ENCODE measurements at regions of chr14 and their contacts with region 1.

Region 1: GRCh38 chr14:63388763-63389431 is 70.2 kb upstream of the GPHB5 start:
- DNase-seq: peak; percentile 18
- H3K4me3 ChIP-seq: no peak overlapping the region
- H3K27ac ChIP-seq: no peak overlapping the region
- H3K27me3 ChIP-seq: no peaks in the 10 kb centered on the region
- CTCF ChIP-seq: peak; percentile 91

Region 2: GRCh38 chr14:62558451-62558850 is 830.4 kb before region 1 on chr14:
- CTCF ChIA-PET with region 1: no interaction called
- POLR2A ChIA-PET with region 1: no interaction called
- DNase-seq: no peak
- H3K4me3 ChIP-seq: no peak overlapping the region
- H3K27ac ChIP-seq: no peak overlapping the region
- H3K27me3 ChIP-seq: no peaks in the 10 kb centered on the region
- CTCF ChIP-seq: no peak

Region 3: GRCh38 chr14:63536387-63536786 is 147.5 kb after region 1 on chr14:
- CTCF ChIA-PET with region 1: interaction called, 10 read pairs
- POLR2A ChIA-PET with region 1: no interaction called
- DNase-seq: no peak
- H3K4me3 ChIP-seq: no peak overlapping the region
- H3K27ac ChIP-seq: no peak overlapping the region
- H3K27me3 ChIP-seq: no peaks in the 10 kb centered on the region
- CTCF ChIP-seq: no peak

Region 4: DNA sequence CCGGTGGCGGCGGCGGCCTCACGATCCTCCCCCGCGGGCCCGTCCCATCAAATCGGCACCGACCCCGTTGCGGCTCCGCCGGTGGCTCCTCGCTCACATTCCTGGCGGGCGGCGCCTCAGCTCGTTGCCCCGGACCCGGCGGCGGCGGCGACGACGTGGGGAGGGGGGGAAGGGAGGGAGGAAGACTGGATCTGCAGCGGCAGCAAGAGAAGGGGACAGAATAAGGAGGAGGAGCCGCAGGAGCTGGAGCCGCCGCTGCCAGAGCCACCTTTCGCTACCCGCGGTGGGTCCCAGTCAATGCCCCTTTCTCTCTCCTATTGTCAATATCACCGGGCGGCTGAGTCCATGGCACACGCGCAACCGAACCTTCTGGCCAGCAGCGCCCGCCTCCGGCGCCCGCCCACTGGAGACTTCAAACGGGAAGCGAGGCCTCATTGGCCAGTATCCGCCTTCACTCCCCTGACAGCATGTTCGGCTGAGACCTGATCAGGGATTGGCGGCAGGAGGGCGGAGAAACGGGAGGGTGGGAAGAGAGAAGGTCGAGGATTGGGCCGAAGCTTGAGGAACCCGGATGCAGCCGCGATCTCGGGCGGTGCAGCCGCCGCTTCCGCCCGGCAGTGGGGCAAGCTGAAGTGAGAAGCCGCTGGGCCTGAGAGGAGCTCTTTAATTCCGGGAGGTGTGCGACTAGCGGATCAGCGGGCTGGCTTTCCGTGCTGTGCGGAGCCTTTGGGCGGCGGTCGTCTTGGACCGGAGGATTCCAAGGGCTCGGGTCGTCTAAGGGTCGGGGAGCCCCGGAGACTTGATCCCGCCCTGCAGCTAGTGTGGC is 154.3 kb after region 1 on chr14 and contains the start of gene PPP2R5E:
- CTCF ChIA-PET with region 1: interaction called, 35 read pairs
- POLR2A ChIA-PET with region 1: no interaction called
- DNase-seq: peak; percentile 97
- H3K4me3 ChIP-seq: peak within 1 kb of the TSS; percentile 89
- H3K27ac ChIP-seq: peak within 1 kb of the TSS; percentile 77
- H3K27me3 ChIP-seq: no peaks in the 10 kb centered on the region
- CTCF ChIP-seq: no peak
- polyA plus RNA-seq, gene PPP2R5E: 18.2 and 20.3 TPM in 2 replicates

Region 5: DNA sequence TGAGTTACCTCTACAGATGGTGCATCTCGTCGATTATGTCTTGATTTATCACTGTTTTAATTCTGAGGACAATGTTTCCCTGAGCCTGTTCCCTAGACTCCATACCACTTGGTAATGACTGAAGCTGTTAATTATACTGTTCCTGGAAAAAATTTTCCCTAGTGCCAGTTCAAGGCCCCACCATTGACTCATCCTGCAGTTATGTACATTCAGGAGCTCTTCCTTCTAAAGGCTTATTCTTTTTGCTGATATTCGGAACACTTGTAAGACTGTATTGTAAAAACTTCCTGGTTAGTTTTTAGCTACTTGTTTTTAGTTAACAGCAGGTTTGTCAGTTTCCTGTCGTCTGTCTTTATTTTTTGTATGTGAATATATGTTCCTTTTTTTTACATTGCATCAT is 184.7 kb after region 1 on chr14:
- CTCF ChIA-PET with region 1: no interaction called
- POLR2A ChIA-PET with region 1: no interaction called
- DNase-seq: no peak
- H3K4me3 ChIP-seq: no peak overlapping the region
- H3K27ac ChIP-seq: no peak overlapping the region
- H3K27me3 ChIP-seq: no peaks in the 10 kb centered on the region
- CTCF ChIP-seq: no peak

Region 6: DNA sequence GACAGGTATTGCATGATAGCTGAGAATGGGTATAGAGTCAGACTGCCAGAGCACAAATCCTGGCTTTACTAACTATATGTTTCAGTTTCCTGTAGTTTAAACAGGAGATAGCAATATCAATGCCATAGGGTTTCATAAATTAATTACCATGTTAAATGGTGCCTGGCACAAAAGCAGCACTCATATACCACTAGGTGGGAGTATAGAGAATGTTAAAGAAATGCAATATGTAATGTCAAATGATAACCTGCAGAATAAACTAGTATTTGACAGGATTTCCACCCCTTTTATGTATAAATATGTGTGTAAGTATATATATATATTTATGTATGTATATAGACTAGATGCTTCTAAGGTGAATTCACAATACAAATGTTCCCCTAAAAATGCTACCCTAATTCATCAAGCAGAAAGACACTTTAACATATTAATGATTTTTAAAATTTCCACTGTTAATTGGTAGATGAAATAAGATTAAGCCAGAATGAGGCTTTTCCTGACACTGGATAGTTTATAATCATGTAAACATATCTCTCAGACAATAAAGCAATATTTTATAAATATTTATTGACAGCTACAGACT is 244.1 kb after region 1 on chr14:
- CTCF ChIA-PET with region 1: interaction called, 31 read pairs
- POLR2A ChIA-PET with region 1: no interaction called
- DNase-seq: no peak
- H3K4me3 ChIP-seq: no peak overlapping the region
- H3K27ac ChIP-seq: no peak overlapping the region
- H3K27me3 ChIP-seq: no peaks in the 10 kb centered on the region
- CTCF ChIP-seq: peak; percentile 74

Region 7: DNA sequence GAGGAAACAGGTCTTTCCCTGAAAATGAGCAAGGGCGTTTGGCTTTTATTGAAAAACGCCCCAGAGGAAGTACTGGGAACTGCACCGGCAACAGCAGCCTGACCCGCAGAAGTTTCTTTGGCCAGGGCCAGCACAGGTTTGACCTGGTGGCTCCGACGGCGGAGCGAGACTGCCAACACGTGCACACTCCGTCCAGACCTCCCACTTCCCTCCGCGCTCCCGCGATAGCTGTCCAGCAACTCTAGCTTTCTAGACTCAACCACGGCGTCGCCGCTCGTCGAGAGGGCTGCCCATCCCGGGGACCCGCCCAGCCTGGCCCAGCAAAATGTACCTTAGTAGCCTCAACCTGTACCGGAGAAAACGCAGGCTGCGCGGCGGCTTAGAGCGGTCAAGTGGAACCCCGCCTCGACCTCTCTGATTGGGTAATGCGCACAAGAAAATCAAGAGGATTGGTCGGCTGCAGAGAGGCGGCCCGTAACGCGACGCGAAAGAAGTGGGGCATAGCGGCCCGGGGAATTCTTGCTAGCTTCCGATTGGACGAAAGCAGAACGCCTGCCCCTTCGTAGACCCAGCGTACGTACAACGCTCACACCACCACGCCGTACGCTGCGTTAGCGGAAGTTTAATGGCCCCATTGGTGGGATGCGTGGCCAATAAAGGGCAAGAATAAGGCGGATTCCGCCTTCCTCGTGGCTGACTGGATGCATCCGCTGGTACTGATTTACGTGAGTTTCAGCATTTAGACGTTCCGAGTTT is 252.8 kb after region 1 on chr14 and contains the start of gene WDR89:
- CTCF ChIA-PET with region 1: interaction called, 21 read pairs
- POLR2A ChIA-PET with region 1: no interaction called
- DNase-seq: peak; percentile 99
- H3K4me3 ChIP-seq: peak within 1 kb of the TSS; percentile 92
- H3K27ac ChIP-seq: peak within 1 kb of the TSS; percentile 99
- H3K27me3 ChIP-seq: no peaks in the 10 kb centered on the region
- CTCF ChIP-seq: peak; percentile 75
- polyA plus RNA-seq, gene WDR89: 6.1 and 9.4 TPM in 2 replicates

Region 8: GRCh38 chr14:63770187-63770807 is 381.4 kb after region 1 on chr14:
- CTCF ChIA-PET with region 1: interaction called, 23 read pairs
- POLR2A ChIA-PET with region 1: interaction called, 4 read pairs
- DNase-seq: peak; percentile 16
- H3K4me3 ChIP-seq: no peak overlapping the region
- H3K27ac ChIP-seq: no peak overlapping the region
- H3K27me3 ChIP-seq: no peaks in the 10 kb centered on the region
- CTCF ChIP-seq: peak; percentile 77